ENCODE measurements at regions of chr5 and their contacts with region 1.

Region 1: DNA sequence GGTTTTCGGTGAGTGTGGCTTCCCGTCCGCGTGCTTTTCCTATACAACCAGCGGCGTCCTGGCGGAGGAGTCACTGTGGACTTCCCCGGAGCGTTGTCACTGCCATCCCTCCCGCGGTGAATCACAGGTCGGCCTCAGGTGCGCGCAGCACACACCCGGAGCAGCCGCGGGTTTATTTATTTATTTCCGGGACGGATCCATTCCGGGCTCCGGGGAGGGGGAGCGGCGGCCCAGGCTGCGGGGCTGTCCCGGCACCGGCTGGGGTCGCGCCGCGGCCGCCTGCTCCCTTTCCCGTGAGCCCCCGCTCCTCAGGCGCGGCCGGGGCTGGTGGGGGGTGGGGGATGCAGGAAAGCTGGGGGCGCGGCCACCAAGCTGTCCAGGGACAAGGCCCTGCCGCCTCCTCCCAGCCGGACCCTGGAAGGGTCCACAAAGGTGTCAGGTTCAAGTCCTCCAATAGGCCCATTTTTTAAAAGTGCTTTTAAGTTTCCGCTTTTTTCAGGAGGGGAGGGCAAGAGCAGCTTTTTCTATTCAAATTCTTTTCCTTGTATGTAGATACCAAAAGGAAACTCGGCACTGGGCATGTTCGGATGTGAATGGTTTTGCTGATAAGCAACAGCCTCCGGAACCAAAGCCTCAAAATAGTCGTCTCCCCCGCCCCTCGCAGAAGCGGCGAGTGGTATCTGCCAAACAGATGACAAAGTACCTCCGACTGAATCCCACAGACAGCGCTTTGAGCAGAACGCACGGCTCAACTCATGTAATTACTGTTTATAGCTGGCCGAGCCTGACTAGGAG is 192.5 kb downstream of the CD180 start:
- DNase-seq: peak; percentile 93
- ATAC-seq: peak; percentile 83
- H3K4me3 Mint-ChIP-seq: peak overlapping the region; percentile 80
- H3K27ac Mint-ChIP-seq: peak overlapping the region; percentile 85
- H3K4me1 Mint-ChIP-seq: peaks cover 57% of the 10 kb centered on the region
- H3K27me3 Mint-ChIP-seq: no peaks in the 10 kb centered on the region
- CTCF ChIP-seq: no peak

Region 2: DNA sequence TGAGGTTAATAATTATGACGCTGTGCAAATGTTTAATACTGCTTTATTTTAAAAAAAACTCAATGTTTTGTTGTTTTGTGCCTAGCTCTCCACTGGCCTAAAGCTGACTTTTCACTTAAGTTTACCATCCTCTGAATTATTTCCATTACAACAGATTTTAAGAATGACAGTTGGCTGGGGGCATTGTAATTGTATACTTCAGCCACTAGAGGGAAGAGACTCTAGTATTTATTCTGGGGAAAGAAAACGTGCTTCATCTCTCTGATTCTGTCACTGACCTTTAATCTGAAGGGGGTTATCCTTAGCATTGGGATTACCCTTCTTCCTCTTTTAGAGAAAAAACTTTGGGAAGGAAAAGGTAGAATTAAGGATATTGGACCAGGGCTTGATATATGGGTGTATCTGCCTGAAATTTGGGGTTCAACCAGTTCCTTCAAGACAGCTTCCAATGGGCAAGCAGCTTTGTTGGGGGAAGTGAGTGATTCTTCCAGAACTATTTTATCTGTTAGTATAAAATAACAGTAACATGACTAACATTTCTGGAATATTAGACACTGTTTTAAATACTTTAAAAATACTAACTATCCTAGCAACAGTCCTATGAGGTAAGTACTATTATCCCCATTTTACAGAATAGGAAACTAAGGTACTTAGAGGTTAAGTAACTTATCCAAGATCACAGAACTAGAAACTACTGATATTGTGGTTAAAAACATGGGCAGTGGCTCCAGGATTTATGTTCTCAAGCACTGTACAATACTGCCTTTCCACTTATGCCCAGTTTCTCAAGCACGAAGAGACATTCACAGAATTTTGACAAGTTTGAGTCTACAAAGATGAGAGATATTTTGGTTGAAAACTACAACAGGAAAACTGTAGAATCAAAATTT is 15.9 kb before region 1 on chr5:
- CTCF ChIA-PET with region 1: interaction called, 12 read pairs
- POLR2A ChIA-PET with region 1: interaction called, 3 read pairs
- intact Hi-C with region 1: no loop called
- DNase-seq: no peak
- ATAC-seq: peak; percentile 79
- H3K4me3 Mint-ChIP-seq: no peak overlapping the region
- H3K27ac Mint-ChIP-seq: no peak overlapping the region
- H3K4me1 Mint-ChIP-seq: peaks cover 7% of the 10 kb centered on the region
- H3K27me3 Mint-ChIP-seq: peaks cover 6% of the 10 kb centered on the region
- CTCF ChIP-seq: peak; percentile 91

Region 3: DNA sequence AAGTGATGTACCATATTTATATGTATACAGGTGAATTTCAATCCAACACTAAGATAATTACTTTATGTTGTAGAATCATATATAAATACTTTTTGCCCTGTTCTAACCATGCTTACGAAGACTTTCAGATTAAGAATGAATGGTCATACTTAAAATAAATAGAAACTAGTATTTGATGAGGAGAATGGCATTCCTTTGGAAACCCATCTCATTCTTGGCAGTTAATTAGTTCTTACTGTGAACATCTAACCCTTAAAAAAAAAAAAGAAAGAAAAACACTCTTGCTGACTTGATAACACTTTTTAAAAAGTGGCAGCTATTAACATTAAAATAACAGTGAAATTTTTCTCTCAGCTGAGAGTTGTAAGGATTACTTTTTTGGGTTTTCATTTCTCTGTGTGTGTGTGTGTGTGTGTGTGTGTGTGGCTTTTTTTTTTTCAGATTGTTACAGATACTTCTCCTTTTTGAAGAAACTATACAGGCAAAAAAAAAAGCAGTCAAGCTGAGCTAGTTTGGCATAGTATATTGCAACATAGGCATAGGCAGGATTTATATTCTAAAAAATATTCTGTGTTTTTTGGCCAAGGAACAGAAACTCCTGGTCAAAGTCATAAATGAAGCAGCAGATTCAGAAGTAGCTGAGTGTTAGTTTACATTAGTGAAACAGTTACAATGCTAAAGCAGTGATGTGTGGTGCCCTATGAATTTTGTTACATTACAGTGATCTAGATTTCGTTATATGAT is 29.0 kb after region 1 on chr5:
- CTCF ChIA-PET with region 1: interaction called, 3 read pairs
- POLR2A ChIA-PET with region 1: interaction called, 4 read pairs
- intact Hi-C with region 1: loop called (anchors 2 kb)
- DNase-seq: no peak
- ATAC-seq: no peak
- H3K4me3 Mint-ChIP-seq: no peak overlapping the region
- H3K27ac Mint-ChIP-seq: peak overlapping the region; percentile 46
- H3K4me1 Mint-ChIP-seq: peaks cover 71% of the 10 kb centered on the region
- H3K27me3 Mint-ChIP-seq: no peaks in the 10 kb centered on the region
- CTCF ChIP-seq: no peak

Region 4: GRCh38 chr5:67156976-67157583 is 152.9 kb after region 1 on chr5:
- CTCF ChIA-PET with region 1: no interaction called
- POLR2A ChIA-PET with region 1: no interaction called
- intact Hi-C with region 1: loop called (anchors 10 kb)
- DNase-seq: peak; percentile 67
- ATAC-seq: peak; percentile 81
- H3K4me3 Mint-ChIP-seq: no peak overlapping the region
- H3K27ac Mint-ChIP-seq: peak overlapping the region; percentile 21
- H3K4me1 Mint-ChIP-seq: peaks cover 39% of the 10 kb centered on the region
- H3K27me3 Mint-ChIP-seq: no peaks in the 10 kb centered on the region
- CTCF ChIP-seq: peak; percentile 92

Region 5: DNA sequence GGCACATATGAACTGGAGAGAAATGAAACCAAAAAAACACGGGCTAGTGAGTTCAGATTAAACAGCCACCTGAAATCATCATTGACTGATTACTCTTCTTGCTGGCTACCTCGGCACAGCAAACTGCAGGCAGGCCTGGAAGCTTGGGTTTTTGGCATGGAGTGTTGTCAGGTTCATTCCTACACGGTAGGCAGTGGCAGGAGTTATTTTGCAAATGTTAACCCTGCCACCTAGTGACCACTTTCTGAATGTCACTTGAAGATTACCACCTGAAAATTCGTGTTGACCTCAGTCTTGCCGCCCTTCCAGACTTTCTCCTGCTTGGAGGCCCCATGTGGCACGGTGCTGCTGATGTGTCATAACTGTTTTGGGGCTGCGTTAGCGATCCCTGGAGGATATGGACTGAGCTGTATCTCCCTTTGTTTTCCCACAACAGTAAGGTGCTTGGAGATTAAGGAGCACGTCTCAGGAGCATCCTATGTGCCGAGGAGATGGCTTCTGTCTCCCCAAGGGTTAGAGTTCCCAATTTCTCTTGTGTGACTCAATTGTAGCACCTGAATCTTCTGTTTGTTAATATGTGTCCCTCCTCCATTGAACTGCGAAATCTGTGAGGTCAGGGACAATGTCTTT is 205.1 kb after region 1 on chr5:
- CTCF ChIA-PET with region 1: interaction called, 4 read pairs
- POLR2A ChIA-PET with region 1: interaction called, 3 read pairs
- intact Hi-C with region 1: loop called (anchors 10 kb)
- DNase-seq: peak; percentile 71
- ATAC-seq: peak; percentile 52
- H3K4me3 Mint-ChIP-seq: no peak overlapping the region
- H3K27ac Mint-ChIP-seq: peak overlapping the region; percentile 25
- H3K4me1 Mint-ChIP-seq: peaks cover 55% of the 10 kb centered on the region
- H3K27me3 Mint-ChIP-seq: peaks cover 2% of the 10 kb centered on the region
- CTCF ChIP-seq: peak; percentile 87

Region 6: DNA sequence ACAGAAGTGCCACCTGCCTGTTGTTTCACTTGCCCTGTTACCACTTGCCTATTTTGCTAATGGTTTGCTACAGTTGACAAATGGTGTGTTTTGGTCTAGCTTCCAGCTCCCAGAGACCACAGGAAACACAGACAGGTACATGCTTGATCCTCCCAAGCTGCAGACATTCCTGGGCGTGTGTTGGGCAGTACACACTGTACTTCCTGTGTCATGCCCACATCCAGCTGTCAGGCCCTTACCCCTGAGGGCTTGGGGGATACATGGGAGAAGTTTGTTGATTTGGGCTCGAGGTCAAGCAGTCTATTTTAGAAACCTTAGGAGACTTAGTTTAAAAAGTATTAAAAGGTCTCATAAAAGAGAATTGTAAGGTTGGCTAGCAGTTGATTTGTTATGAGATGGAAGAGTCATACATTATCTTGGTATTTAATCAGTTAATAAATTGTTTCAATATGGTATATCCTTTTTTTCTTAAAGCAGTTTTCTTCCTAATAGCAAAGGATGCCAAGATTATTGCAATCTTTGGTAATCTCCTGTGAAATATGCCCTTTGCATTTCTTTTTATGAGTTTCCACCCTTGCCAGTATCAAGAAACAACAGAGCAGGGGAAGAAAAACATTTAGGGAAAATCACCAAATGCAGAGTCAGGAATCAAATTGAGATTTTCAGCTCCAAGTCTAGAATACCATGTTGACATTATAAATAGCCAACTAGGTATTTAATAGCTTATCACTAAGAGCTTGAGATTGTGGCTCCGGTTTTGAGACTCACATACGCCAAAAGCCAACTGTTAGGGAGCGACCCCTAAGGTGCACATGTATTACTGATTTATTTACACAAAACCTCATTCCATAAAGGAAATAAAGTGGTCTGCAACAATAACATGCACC is 244.8 kb after region 1 on chr5:
- CTCF ChIA-PET with region 1: no interaction called
- POLR2A ChIA-PET with region 1: no interaction called
- intact Hi-C with region 1: no loop called
- DNase-seq: no peak
- ATAC-seq: no peak
- H3K4me3 Mint-ChIP-seq: no peak overlapping the region
- H3K27ac Mint-ChIP-seq: no peak overlapping the region
- H3K4me1 Mint-ChIP-seq: peaks cover 11% of the 10 kb centered on the region
- H3K27me3 Mint-ChIP-seq: no peaks in the 10 kb centered on the region
- CTCF ChIP-seq: no peak

Measured in activated CD8-positive, alpha-beta T cell treated with anti-CD3 and anti-CD28 coated beads for 36 hours (primary cell).